Activated CD8-positive, alpha-beta T cell treated with anti-CD3 and anti-CD28 coated beads, Interleukin-2, amount 10 ng/mL, durations not matched to agents 7 days and 5 days (primary cell): ENCODE measurements at regions of chr12 and their contacts with region 1.

Region 1: GRCh38 chr12:109093022-109093918 is at the start of gene ALKBH2:
- DNase-seq: peak; percentile 95
- ATAC-seq: peak; percentile 71
- H3K4me3 Mint-ChIP-seq: peak within 1 kb of the TSS; percentile 69
- H3K27ac Mint-ChIP-seq: peak within 1 kb of the TSS; percentile 79
- H3K4me1 Mint-ChIP-seq: peaks cover 32% of the 10 kb centered on the region
- H3K27me3 Mint-ChIP-seq: no peaks in the 10 kb centered on the region
- total RNA-seq, gene ALKBH2: 10.8 to 15.3 TPM

Region 2: DNA sequence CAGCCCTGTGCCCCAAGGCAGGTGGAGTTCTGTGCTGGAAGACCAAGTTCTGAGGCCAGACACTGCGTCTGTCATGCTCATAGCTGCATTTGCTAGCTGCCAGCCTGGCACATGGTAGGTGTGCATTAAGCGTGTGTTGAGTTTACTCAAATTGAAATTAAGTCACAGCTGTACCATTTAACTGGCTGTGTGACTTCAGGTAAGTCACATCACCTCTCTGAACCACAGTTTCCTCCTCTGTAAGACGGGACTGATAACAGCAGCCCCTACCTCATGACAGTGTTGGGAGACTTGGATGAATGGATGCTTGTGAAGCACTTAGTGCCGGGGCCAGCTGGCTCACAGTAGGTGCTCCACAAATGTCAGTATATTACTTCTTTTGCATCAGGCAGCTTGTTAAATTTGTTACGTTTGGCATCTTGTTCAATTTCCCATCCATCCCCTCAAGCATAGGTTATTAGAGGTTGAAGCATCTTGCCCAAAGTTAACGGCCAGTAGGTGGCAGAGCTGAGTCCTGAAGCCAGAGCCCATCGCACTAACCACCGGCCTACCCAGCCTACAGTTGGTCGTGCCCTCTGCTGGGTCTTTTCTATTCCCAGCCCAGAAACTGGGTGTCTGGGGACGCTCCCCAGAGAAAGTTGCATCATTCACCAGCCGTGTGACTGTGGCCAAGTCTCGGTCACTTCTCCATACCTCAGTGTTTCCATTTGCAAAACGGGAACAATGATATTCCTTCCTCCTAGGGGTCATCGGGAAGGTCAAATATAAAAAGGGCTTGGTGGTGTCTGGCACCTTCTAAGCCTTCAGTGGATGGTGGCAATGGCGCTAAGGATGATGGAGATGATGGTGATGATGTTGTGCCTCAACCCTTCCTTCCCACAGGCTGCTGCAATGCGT is 208.9 kb before region 1 on chr12:
- CTCF ChIA-PET with region 1: interaction called, 16 read pairs
- POLR2A ChIA-PET with region 1: no interaction called
- DNase-seq: peak; percentile 77
- ATAC-seq: peak; percentile 75
- H3K4me3 Mint-ChIP-seq: no peak overlapping the region
- H3K27ac Mint-ChIP-seq: no peak overlapping the region
- H3K4me1 Mint-ChIP-seq: no peaks in the 10 kb centered on the region
- H3K27me3 Mint-ChIP-seq: peaks cover 5% of the 10 kb centered on the region

Region 3: GRCh38 chr12:108950991-108951739 is 142.1 kb before region 1 on chr12:
- CTCF ChIA-PET with region 1: interaction called, 13 read pairs
- POLR2A ChIA-PET with region 1: no interaction called
- DNase-seq: peak; percentile 81
- ATAC-seq: peak; percentile 92
- H3K4me3 Mint-ChIP-seq: no peak overlapping the region
- H3K27ac Mint-ChIP-seq: no peak overlapping the region
- H3K4me1 Mint-ChIP-seq: peaks cover 7% of the 10 kb centered on the region
- H3K27me3 Mint-ChIP-seq: peaks cover 23% of the 10 kb centered on the region

Region 4: DNA sequence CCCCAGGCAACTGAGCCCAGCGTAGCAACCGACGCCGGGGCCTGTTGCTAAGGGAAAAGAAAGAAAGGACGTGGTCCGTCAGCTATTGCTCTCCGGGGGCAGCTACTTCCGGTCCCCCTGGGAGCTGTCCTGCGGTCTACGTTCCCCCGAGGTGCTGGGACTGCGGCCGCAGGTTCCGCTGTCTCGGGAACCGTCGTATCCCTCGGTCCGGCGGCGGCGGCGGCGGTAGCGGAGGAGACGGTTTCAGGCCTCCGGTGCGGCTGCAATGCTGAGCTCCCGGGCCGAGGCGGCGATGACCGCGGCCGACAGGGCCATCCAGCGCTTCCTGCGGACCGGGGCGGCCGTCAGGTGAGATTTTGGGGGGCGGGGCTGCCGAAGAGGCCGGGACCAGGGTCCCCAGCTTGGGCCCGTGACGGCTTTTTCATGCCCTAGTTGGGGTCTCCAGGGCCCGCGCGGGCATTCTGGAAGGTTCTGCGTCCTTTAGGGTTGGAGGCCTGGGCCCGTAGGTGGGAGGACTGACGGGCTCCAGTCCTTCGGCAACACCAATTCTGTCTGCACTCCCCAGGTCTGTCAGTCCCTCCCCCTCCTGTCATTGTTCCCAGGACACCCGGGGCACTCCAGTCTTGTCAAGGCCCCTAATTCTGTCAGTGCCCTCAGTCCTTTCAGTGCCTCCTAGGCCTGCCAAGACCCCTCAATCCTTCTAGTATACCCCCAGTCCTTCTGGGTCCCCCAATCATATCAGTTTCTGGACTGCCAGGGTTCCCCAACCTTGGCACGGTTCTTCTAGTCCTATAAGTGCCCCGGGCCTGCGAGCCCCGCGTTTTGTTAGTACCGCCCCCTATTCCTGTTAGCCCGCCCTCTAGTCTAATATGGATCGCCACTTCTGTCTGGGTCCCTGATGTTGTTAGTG is 40.6 kb before region 1 on chr12 and contains the start of gene USP30:
- CTCF ChIA-PET with region 1: interaction called, 15 read pairs
- POLR2A ChIA-PET with region 1: interaction called, 5 read pairs
- DNase-seq: peak; percentile 86
- ATAC-seq: peak; percentile 76
- H3K4me3 Mint-ChIP-seq: peak within 1 kb of the TSS; percentile 81
- H3K27ac Mint-ChIP-seq: peak within 1 kb of the TSS; percentile 91
- H3K4me1 Mint-ChIP-seq: peaks cover 12% of the 10 kb centered on the region
- H3K27me3 Mint-ChIP-seq: no peaks in the 10 kb centered on the region
- total RNA-seq, gene USP30: 5.9 to 8.8 TPM

Region 5: GRCh38 chr12:109110988-109111495 is 17.8 kb after region 1 on chr12:
- CTCF ChIA-PET with region 1: interaction called, 26 read pairs
- POLR2A ChIA-PET with region 1: no interaction called
- DNase-seq: peak; percentile 60
- ATAC-seq: peak; percentile 83
- H3K4me3 Mint-ChIP-seq: peak overlapping the region; percentile 67
- H3K27ac Mint-ChIP-seq: peak overlapping the region; percentile 69
- H3K4me1 Mint-ChIP-seq: peaks cover 24% of the 10 kb centered on the region
- H3K27me3 Mint-ChIP-seq: no peaks in the 10 kb centered on the region

Region 6: GRCh38 chr12:109203480-109203879 is 110.2 kb after region 1 on chr12:
- CTCF ChIA-PET with region 1: no interaction called
- POLR2A ChIA-PET with region 1: no interaction called
- DNase-seq: no peak
- ATAC-seq: no peak
- H3K4me3 Mint-ChIP-seq: no peak overlapping the region
- H3K27ac Mint-ChIP-seq: no peak overlapping the region
- H3K4me1 Mint-ChIP-seq: no peaks in the 10 kb centered on the region
- H3K27me3 Mint-ChIP-seq: no peaks in the 10 kb centered on the region